Ascending aorta (tissue), 2 donors: ENCODE measurements at regions of chr11 and their contacts with region 1.

Region 1: GRCh38 chr11:65662799-65663638 is at the start of gene RELA:
- DNase-seq: peak; percentile 83 to 97
- H3K4me3 ChIP-seq: peak within 1 kb of the TSS; percentile 95 to 99
- H3K27ac ChIP-seq: peak within 1 kb of the TSS; percentile 98
- H3K4me1 ChIP-seq: peaks cover 11 to 32% of the 10 kb centered on the region in 2 donors
- H3K27me3 ChIP-seq: no peaks in the 10 kb centered on the region
- CTCF ChIP-seq: peak in 1 of 3 experiments; percentile 20
- total RNA-seq, gene RELA: 115 TPM

Region 2: DNA sequence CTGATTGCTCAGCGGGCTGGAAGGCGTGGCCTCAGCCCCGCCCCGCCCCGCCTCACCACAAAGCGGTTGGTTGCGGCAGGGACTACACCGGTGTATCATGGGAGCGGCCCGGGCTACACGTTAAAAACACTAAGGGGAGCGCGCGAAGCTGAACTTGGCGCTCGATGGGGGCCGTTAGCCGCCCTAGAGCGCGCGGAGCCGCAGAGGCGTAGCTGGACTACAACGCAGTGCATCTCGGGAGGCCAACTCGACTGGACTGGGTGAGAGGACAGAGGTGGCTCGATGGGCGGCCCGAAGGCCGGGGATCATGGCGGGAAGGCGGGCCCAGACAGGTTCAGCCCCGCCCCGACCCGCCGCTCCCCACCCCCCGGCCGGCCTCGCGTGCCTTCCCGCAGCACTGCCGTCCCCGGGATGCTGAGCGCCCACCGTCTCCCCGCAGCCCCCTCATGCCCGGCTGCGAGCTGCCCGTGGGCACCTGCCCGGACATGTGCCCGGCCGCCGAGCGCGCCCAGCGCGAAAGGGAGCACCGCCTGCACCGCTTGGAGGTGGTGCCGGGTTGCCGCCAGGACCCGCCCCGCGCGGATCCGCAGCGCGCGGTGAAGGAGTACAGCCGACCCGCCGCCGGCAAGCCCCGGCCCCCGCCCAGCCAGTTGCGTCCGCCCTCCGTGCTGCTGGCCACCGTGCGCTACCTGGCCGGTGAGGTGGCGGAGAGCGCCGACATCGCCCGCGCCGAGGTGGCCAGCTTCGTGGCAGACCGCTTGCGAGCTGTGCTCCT is 622.0 kb before region 1 on chr11 and contains the start of gene SAC3D1:
- intact Hi-C with region 1: loop called (anchors 10 kb)
- DNase-seq: peak; percentile 62 to 94
- H3K4me3 ChIP-seq: peak within 1 kb of the TSS; percentile 82 to 95
- H3K27ac ChIP-seq: peak within 1 kb of the TSS; percentile 89
- H3K4me1 ChIP-seq: peaks cover 4 to 6% of the 10 kb centered on the region in 2 donors
- H3K27me3 ChIP-seq: no peaks in the 10 kb centered on the region
- CTCF ChIP-seq: no peak
- total RNA-seq, gene SAC3D1: 19.6 TPM

Region 3: GRCh38 chr11:65558002-65558931 is 104.8 kb before region 1 on chr11 and contains the start of gene LTBP3:
- intact Hi-C with region 1: loop called (anchors 5 kb)
- DNase-seq: peak in 1 of 2 donors; percentile 93
- H3K4me3 ChIP-seq: peak within 1 kb of the TSS; percentile 79 to 82
- H3K27ac ChIP-seq: peak within 1 kb of the TSS; percentile 97 to 99
- H3K4me1 ChIP-seq: peaks cover 26 to 69% of the 10 kb centered on the region in 2 donors
- H3K27me3 ChIP-seq: no peaks in the 10 kb centered on the region
- CTCF ChIP-seq: no peak
- total RNA-seq, gene LTBP3: 702 TPM

Region 4: DNA sequence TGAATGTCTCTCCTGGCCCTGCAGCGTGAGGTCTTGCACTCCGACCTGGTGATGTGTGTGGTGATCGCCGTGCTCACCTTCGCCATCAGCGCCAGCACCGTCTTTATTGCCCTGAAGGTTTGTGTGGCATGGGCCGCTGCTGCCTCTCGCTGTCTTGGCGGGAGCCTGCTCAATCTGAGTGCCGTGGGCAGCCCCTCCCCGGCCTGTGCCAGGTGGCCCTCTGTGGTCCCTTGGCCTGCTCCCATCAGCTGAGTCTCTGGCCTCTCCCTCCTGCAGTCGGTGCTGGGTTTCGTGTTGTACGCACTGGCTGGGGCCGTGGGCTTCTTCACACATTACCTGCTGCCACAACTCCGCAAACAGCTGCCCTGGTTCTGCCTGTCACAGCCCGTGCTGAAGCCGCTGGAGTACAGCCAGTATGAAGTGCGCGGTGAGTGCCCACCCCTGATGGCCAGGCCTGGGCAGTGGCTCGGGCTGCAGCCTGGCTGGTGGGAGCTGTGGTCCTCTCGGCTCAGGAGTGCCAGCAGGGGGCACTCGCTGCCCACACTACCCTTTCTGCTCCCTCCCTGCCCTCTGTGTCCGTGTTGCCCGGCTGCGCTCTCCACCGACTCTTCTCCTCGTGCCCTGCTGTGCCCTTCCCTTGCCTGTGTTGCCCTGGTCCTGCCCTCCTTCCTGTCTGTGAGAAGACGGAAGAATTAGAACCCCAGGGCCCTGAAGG is 37.2 kb before region 1 on chr11:
- intact Hi-C with region 1: no loop called
- DNase-seq: no peak
- H3K4me3 ChIP-seq: no peak overlapping the region
- H3K27ac ChIP-seq: no peak overlapping the region
- H3K4me1 ChIP-seq: no peaks in the 10 kb centered on the region
- H3K27me3 ChIP-seq: no peaks in the 10 kb centered on the region
- CTCF ChIP-seq: peak; percentile 53 to 54 (median 53)

Region 5: DNA sequence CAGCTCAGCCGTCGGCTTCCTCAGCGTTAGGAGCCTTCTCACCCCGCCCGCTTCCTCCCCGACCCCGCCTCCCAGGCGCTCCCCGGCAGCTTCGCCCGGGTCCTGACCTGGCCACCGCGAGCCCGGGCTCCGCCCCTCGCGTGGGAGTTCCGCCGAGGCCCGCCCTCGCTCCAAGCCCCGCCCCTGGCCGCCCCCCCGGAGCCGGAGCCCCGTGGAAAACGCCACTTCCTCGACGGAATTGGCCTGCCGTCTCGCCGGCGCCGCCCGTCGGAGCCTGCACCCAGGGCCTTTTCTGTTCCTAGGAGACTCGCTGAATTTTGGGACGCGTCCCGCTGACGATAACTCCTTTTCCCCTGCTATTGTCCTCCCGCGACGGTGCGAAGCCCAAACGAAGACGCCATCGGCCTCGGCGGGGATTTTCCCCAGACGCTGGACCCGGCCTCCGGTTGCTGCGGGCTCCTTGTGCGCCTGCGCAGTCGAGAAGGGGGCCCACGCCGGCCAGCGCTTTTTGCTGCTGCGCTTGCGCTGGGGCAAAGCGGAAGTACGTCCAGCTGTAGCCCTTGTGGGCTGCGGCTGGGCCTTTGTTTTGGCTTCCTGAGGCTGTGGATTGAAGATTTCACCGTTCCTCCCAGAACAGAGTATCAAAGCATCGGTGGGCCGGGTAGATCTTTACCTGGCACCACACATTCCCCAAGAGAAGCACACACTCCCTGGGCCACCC is 10.3 kb before region 1 on chr11:
- intact Hi-C with region 1: loop called (anchors 1 kb)
- DNase-seq: peak; percentile 71 to 96
- H3K4me3 ChIP-seq: peak overlapping the region; percentile 51 to 62
- H3K27ac ChIP-seq: peak overlapping the region; percentile 89 to 93
- H3K4me1 ChIP-seq: peaks cover 12 to 17% of the 10 kb centered on the region in 2 donors
- H3K27me3 ChIP-seq: no peaks in the 10 kb centered on the region
- CTCF ChIP-seq: no peak

Region 6: DNA sequence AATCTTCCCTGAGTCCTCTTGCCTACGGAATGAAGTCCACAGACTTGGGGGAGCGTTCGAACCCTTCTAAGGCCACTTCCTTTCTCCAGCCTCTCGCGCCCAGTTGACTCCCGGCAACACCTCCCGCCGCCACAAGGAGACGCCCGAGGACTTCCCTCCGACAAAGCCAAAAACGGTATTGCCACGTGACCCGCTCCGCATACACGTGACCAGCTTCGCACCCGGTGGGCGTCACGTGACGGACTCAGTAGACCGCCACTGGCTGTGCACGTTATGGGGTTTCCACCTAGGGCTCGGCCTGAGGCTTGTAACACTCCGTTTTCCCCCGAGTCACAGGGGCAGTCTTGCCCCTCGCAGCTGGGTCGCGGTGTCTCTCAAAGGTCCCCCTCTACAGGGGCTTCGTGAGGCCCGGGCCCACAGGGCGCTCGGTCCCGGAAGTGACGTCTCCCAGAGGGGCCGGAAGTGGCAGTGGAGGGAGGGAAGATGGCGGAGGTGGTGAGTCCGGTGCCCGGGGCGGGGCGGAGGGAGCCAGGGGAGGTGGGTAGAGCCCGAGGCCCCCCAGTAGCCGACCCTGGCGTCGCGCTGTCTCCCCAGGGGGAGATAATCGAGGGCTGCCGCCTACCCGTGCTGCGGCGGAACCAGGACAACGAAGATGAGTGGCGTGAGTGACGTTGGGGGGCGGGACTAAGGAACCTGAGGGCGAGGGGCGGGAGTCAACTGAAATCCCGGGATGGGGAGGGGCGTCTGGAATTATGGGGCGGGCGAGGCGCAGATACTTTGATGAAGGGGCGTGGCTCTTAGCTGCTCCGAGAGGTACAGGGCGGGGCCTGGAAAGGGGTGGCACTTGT is 49.0 kb after region 1 on chr11 and contains the start of gene KAT5:
- intact Hi-C with region 1: loop called (anchors 1 kb)
- DNase-seq: peak; percentile 96 to 99
- H3K4me3 ChIP-seq: peak within 1 kb of the TSS; percentile 72 to 94
- H3K27ac ChIP-seq: peak within 1 kb of the TSS; percentile 96 to 100
- H3K4me1 ChIP-seq: peaks cover 4 to 19% of the 10 kb centered on the region in 2 donors
- H3K27me3 ChIP-seq: no peaks in the 10 kb centered on the region
- CTCF ChIP-seq: peak; percentile 95 to 99 (median 98)
- total RNA-seq, gene KAT5: 31.0 TPM

Region 7: DNA sequence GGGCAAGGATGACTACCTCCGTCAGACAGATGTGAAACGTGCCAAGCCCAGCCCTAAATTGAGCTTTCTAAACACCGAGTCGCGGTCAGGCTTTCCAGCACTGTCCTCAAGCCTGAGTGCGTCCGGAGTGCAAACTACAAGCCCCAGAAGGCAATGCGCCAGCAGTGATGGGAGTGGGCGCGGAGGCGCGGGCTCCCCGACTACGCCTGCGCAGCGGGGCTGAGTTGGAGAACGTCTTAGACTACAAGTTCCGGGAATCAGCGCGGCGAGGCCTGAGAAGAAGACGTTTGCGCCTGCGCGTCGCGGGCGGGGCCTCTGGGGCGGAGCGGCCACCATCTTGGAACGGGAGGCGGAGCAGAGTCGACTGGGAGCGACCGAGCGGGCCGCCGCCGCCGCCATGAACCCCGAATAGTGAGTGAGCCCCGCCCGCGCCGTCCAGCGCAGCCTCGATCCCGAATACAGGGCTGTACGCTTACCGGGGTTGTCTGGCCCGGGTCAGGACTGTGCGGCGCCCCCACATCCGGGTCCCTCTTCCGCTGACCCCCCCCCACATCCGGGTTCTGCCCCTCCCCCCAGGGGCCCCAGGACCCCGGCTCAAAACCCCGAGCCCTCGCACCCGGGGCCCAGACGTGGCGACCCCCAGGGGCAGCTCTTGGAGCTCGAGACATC is 605.4 kb after region 1 on chr11 and contains the start of gene RAB1B:
- intact Hi-C with region 1: loop called (anchors 2 kb)
- DNase-seq: peak; percentile 98 to 100
- H3K4me3 ChIP-seq: peak within 1 kb of the TSS; percentile 63 to 84
- H3K27ac ChIP-seq: peak within 1 kb of the TSS; percentile 94 to 99
- H3K4me1 ChIP-seq: peaks cover 0 to 24% of the 10 kb centered on the region in 2 donors
- H3K27me3 ChIP-seq: no peaks in the 10 kb centered on the region
- CTCF ChIP-seq: no peak
- total RNA-seq, gene RAB1B: 171 TPM